ENCODE measurements at regions of chr4 and their contacts with region 1.

Region 1: DNA sequence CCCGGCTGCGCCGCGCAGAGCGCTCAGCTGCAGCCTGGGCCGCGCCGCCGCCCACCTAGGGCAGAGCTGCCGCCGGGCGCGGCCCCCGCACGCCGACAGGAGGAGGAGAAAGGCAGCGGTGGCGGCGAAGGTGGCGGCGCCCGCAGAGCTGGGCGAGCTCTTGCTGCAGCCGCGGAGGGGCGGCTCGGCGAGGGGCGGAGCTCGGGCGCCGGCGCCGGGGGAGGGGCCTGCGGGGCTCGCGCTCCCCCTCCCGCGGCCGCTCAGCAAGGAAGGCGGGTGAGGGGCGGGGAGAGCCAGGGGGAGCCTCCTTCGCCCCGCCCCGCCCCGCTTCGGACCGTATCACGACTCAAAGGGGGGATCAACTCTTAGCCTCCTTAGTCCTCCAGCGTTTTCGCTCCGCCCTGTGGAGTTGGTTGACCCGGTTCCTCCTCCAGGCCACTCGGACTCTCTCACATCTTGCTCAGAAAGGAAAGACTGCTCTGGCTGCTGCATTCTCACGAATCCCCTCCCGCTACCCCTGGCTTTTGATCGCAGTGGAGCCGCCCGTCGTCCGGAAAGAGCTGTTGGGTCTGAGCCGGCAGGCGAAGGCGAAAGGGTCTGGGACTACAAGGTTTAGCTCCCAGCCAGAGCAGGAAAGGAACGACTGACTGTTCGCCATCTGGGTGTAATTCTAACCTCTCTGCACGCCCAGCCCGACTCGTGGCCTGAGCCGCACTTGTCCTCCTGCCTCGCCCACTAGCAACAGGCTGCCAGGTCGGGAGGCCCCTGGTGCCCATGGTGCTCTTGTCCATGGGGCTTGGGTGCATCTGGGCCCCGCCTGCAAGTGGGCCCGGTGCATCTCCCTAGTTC is at the start of gene ATP8A1:
- DNase-seq: peak; percentile 88 to 90
- ATAC-seq: peak; percentile 81 to 84
- H3K4me3 ChIP-seq: peak within 1 kb of the TSS; percentile 90 to 94 (median 92)
- H3K27ac ChIP-seq: peak within 1 kb of the TSS; percentile 84 to 94 (median 89)
- H3K4me1 ChIP-seq: peaks cover 44 to 54% of the 10 kb centered on the region in 2 donors
- H3K27me3 ChIP-seq: no peaks in the 10 kb centered on the region
- CTCF ChIP-seq: peak; percentile 22 to 38 (median 28)
- POLR2A ChIP-seq: peak; percentile 87 to 93
- total RNA-seq, gene ATP8A1: 23.8 to 74.2 (median 31.1) TPM

Region 2: DNA sequence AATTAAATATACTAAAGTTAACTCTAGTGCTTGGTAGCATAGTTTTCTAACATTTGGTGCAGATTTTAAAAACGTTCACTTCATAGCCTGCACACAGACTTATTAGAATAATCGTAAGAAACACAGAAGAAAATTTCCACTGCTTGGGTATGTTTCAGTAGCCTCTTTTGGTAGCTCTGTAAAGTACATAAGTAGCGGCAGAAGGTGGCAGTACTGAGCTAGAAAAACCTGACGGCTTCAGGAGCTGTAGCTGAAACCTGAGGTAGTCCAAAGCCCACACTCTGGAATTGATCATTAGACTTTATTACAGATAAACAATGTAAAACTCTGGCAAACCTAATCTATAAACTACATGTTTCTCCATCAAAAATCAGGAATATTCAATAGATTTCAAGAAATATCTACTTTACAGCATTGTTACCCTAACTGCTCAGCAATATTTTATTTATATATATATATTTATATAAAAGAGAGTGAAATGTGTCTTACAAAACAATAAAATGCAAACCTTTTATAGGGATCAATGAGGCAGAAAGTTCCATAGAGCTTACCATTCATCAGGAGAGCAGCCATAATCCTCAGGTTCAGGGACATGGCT is 88.5 kb before region 1 on chr4:
- in situ Hi-C with region 1: loop called in 2 of 4 experiments (anchors 10 to 25 kb)
- intact Hi-C with region 1: loop called (anchors 1 kb)
- DNase-seq: peak; percentile 37 to 51
- ATAC-seq: peak; percentile 92 to 93
- H3K4me3 ChIP-seq: no peak overlapping the region
- H3K27ac ChIP-seq: peak overlapping the region in 2 of 4 donors; percentile 64 to 65
- H3K4me1 ChIP-seq: peaks cover 19 to 26% of the 10 kb centered on the region in 2 donors
- H3K27me3 ChIP-seq: no peaks in the 10 kb centered on the region
- CTCF ChIP-seq: peak; percentile 69 to 82 (median 74)
- POLR2A ChIP-seq: no peak

Region 3: GRCh38 chr4:42594888-42595287 is 62.3 kb before region 1 on chr4:
- in situ Hi-C with region 1: loop called in 2 of 4 experiments (anchors 5 to 10 kb)
- intact Hi-C with region 1: no loop called
- DNase-seq: no peak
- ATAC-seq: no peak
- H3K4me3 ChIP-seq: no peak overlapping the region
- H3K27ac ChIP-seq: peak overlapping the region in 1 of 4 donors; percentile 25
- H3K4me1 ChIP-seq: peaks cover 9 to 19% of the 10 kb centered on the region in 2 donors
- H3K27me3 ChIP-seq: no peaks in the 10 kb centered on the region
- CTCF ChIP-seq: no peak
- POLR2A ChIP-seq: no peak

Region 4: DNA sequence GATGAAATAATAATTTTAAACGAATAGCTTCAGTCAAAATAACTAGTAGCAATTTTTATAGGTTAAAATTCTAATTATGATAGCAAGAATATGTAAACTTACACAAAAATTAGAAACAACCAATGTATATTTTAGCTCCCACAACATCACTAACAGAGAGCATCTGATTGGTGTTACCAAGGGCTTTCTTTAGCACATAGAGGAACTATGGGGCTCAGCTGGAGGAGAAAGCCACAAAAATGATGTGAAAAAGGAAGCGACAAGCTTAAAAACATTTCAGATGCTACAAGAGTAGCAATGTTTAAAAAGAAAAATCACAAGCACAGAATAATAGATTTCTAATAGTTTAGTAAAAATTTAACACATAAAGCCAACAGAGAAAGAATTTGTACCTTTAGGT is 56.6 kb before region 1 on chr4:
- in situ Hi-C with region 1: loop called in 1 of 4 experiments (anchors 10 kb)
- intact Hi-C with region 1: loop called (anchors 1 kb)
- DNase-seq: no peak
- ATAC-seq: no peak
- H3K4me3 ChIP-seq: no peak overlapping the region
- H3K27ac ChIP-seq: no peak overlapping the region
- H3K4me1 ChIP-seq: peaks cover 20 to 30% of the 10 kb centered on the region in 2 donors
- H3K27me3 ChIP-seq: no peaks in the 10 kb centered on the region
- CTCF ChIP-seq: no peak
- POLR2A ChIP-seq: no peak

Region 5: GRCh38 chr4:42633605-42634388 is 23.4 kb before region 1 on chr4:
- in situ Hi-C with region 1: no loop called
- intact Hi-C with region 1: loop called (anchors 2 kb)
- DNase-seq: no peak
- ATAC-seq: no peak
- H3K4me3 ChIP-seq: no peak overlapping the region
- H3K27ac ChIP-seq: peak overlapping the region in 3 of 4 donors; percentile 35 to 80 (median 42)
- H3K4me1 ChIP-seq: peaks cover 81 to 86% of the 10 kb centered on the region in 2 donors
- H3K27me3 ChIP-seq: no peaks in the 10 kb centered on the region
- CTCF ChIP-seq: no peak
- POLR2A ChIP-seq: no peak

Region 6: GRCh38 chr4:42643685-42644084 is 13.5 kb before region 1 on chr4:
- in situ Hi-C with region 1: no loop called
- intact Hi-C with region 1: loop called (anchors 1 kb)
- DNase-seq: peak in 1 of 2 donors; percentile 49
- ATAC-seq: peak; percentile 61 to 84
- H3K4me3 ChIP-seq: peak overlapping the region in 3 of 4 donors; percentile 17 to 20 (median 19)
- H3K27ac ChIP-seq: peak overlapping the region; percentile 83 to 94 (median 86)
- H3K4me1 ChIP-seq: peaks cover 84 to 95% of the 10 kb centered on the region in 2 donors
- H3K27me3 ChIP-seq: no peaks in the 10 kb centered on the region
- CTCF ChIP-seq: no peak
- POLR2A ChIP-seq: no peak

Region 7: DNA sequence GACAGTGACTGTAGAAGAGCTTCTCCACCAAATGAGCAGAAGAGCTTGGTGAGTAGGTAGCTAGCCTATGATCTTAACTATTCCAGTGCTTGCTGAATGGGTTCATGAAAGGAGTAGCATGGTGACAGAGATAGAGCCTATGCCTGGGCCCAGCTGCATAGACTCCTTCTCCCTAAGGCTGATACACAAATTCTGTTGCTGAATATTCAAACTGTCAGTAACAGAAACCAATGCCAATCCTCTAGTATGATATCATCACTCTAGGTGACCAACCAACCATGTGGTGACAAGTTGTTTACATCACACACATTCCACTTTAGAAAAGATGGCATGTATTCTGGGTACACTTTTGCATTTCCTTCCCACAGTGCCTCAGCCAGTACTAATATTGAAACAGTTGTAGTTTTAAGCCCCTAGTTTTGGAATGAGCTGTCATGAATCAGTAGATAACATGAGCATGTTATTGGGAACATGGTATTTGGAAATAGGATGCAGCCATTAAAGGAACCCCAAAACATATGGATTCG is 131.9 kb after region 1 on chr4:
- in situ Hi-C with region 1: no loop called
- intact Hi-C with region 1: no loop called
- DNase-seq: no peak
- ATAC-seq: no peak
- H3K4me3 ChIP-seq: no peak overlapping the region
- H3K27ac ChIP-seq: no peak overlapping the region
- H3K4me1 ChIP-seq: no peaks in the 10 kb centered on the region
- H3K27me3 ChIP-seq: no peaks in the 10 kb centered on the region
- CTCF ChIP-seq: no peak
- POLR2A ChIP-seq: no peak